Panc1 (cell line): ENCODE measurements at regions of chrX and their contacts with region 1.

Region 1: DNA sequence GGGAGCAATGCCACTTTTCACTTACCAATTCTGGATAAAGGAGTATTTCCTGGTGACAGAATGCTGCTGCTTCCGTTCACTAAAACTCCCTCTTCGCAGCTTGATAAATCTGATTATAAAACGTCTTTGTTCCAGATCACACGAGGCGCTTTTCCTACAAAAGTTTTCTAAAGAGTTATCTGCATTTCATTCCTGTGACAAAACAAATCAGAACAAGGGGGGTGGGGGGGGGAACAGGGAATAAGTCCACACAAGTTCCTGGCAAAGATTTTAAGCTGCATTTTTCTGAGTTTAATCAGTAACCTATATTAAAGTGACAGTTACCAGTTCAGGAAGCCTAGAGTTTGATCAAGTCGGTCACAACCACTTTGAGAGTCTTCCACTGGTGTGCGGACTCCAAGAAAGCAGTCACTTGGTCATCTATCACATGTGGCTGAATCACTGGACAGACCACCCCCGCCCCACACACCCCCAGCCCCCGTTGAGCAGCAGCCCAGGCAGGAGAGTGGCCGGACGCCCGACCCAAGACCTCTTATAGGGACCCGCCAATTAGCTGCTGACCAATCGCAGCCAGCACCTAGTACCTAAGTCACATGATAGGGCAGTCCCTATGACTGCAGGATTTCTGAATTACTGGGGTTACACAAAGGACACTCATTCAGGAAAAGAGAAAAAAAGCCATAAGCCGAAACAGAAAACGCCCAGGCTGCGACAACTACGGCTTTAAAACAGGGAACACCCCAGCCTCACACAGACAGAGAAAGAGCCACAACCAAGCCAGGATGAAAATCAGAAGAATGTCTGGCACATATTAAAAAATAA is 569.3 kb upstream of the DIPK2B start:
- DNase-seq: no peak
- ATAC-seq: peak; percentile 85
- H3K4me3 ChIP-seq: peak overlapping the region; percentile 54 to 74
- H3K27ac ChIP-seq: peak overlapping the region; percentile 94
- H3K4me1 ChIP-seq: peaks cover 48% of the 10 kb centered on the region
- H3K27me3 ChIP-seq: no peaks in the 10 kb centered on the region
- CTCF ChIP-seq: no peak

Region 2: GRCh38 chrX:45668686-45669443 is 101.1 kb before region 1 on chrX:
- CTCF ChIA-PET with region 1: no interaction called
- POLR2A ChIA-PET with region 1: no interaction called
- in situ Hi-C with region 1: no loop called
- intact Hi-C with region 1: no loop called
- DNase-seq: peak; percentile 10
- ATAC-seq: no peak
- H3K4me3 ChIP-seq: no peak overlapping the region
- H3K27ac ChIP-seq: no peak overlapping the region
- H3K4me1 ChIP-seq: no peaks in the 10 kb centered on the region
- H3K27me3 ChIP-seq: no peaks in the 10 kb centered on the region
- CTCF ChIP-seq: no peak

Region 3: GRCh38 chrX:45811326-45811725 is 41.4 kb after region 1 on chrX:
- CTCF ChIA-PET with region 1: no interaction called
- POLR2A ChIA-PET with region 1: no interaction called
- in situ Hi-C with region 1: no loop called
- intact Hi-C with region 1: no loop called
- DNase-seq: no peak
- ATAC-seq: no peak
- H3K4me3 ChIP-seq: no peak overlapping the region
- H3K27ac ChIP-seq: no peak overlapping the region
- H3K4me1 ChIP-seq: peaks cover 30% of the 10 kb centered on the region
- H3K27me3 ChIP-seq: no peaks in the 10 kb centered on the region
- CTCF ChIP-seq: no peak

Region 4: GRCh38 chrX:45843518-45843917 is 73.5 kb after region 1 on chrX:
- CTCF ChIA-PET with region 1: no interaction called
- POLR2A ChIA-PET with region 1: interaction called, 12 read pairs
- in situ Hi-C with region 1: no loop called
- intact Hi-C with region 1: no loop called
- DNase-seq: no peak
- ATAC-seq: no peak
- H3K4me3 ChIP-seq: no peak overlapping the region
- H3K27ac ChIP-seq: no peak overlapping the region
- H3K4me1 ChIP-seq: no peaks in the 10 kb centered on the region; the same call in 1 of the 2 replicates
- H3K27me3 ChIP-seq: no peaks in the 10 kb centered on the region
- CTCF ChIP-seq: peak; percentile 29; the same call in 1 of the 2 replicates

Region 5: GRCh38 chrX:46180258-46180687 is 410.3 kb after region 1 on chrX:
- CTCF ChIA-PET with region 1: no interaction called
- POLR2A ChIA-PET with region 1: interaction called, 10 read pairs
- in situ Hi-C with region 1: no loop called
- intact Hi-C with region 1: no loop called
- DNase-seq: no peak
- ATAC-seq: no peak
- H3K4me3 ChIP-seq: no peak overlapping the region
- H3K27ac ChIP-seq: no peak overlapping the region
- H3K4me1 ChIP-seq: no peaks in the 10 kb centered on the region
- H3K27me3 ChIP-seq: no peaks in the 10 kb centered on the region
- CTCF ChIP-seq: no peak